PC-9 (cell line): ENCODE measurements at regions of chr4 and their contacts with region 1.

Region 1: GRCh38 chr4:124596816-124597215 is 115.7 kb downstream of the ANKRD50 start:
- DNase-seq: no peak
- H3K4me3 ChIP-seq: no peak overlapping the region
- H3K27ac ChIP-seq: no peak overlapping the region
- H3K4me1 ChIP-seq: no peaks in the 10 kb centered on the region
- H3K27me3 ChIP-seq: no peaks in the 10 kb centered on the region
- CTCF ChIP-seq: no peak

Region 2: GRCh38 chr4:124478470-124478869 is 118.3 kb before region 1 on chr4:
- CTCF ChIA-PET with region 1: no interaction called
- POLR2A ChIA-PET with region 1: interaction called, 28 read pairs
- intact Hi-C with region 1: no loop called
- DNase-seq: no peak
- H3K4me3 ChIP-seq: no peak overlapping the region
- H3K27ac ChIP-seq: no peak overlapping the region
- H3K4me1 ChIP-seq: no peaks in the 10 kb centered on the region
- H3K27me3 ChIP-seq: no peaks in the 10 kb centered on the region
- CTCF ChIP-seq: no peak